ENCODE measurements at regions of chr11 and their contacts with region 1.

Region 1: GRCh38 chr11:117985953-117986887 is at the start of gene IL10RA:
- DNase-seq: peak; percentile 93 to 95 (median 94)
- H3K4me3 ChIP-seq: peak within 1 kb of the TSS; percentile 95 to 99 (median 98)
- H3K4me3 Mint-ChIP-seq: peak within 1 kb of the TSS; percentile 93 to 98
- H3K27ac ChIP-seq: peak within 1 kb of the TSS; percentile 96 to 100
- H3K27ac Mint-ChIP-seq: peak within 1 kb of the TSS; percentile 96 to 100 (median 98)
- H3K4me1 ChIP-seq: peaks cover 58 to 63% of the 10 kb centered on the region in 2 donors
- H3K4me1 Mint-ChIP-seq: peaks cover 74% of the 10 kb centered on the region
- H3K27me3 ChIP-seq: no peaks in the 10 kb centered on the region
- H3K27me3 Mint-ChIP-seq: peaks cover 0 to 1% (median 1%) of the 10 kb centered on the region in 3 donors
- CTCF ChIP-seq: no peak
- polyA plus RNA-seq, gene IL10RA: 152 to 413 (median 226) TPM

Region 2: GRCh38 chr11:117837070-117837776 is 149.0 kb before region 1 on chr11:
- intact Hi-C with region 1: loop called in 1 of 2 experiments (anchors 5 kb)
- DNase-seq: peak in 1 of 3 donors; percentile 59
- H3K4me3 ChIP-seq: peak overlapping the region in 2 of 3 experiments; percentile 35 to 71
- H3K4me3 Mint-ChIP-seq: peak overlapping the region; percentile 82 to 97
- H3K27ac ChIP-seq: peak overlapping the region; percentile 85 to 94
- H3K27ac Mint-ChIP-seq: peak overlapping the region in 6 of 7 donors; percentile 94 to 98 (median 96)
- H3K4me1 ChIP-seq: peaks cover 88 to 93% of the 10 kb centered on the region in 2 donors
- H3K4me1 Mint-ChIP-seq: peaks cover 92% of the 10 kb centered on the region
- H3K27me3 ChIP-seq: no peaks in the 10 kb centered on the region
- H3K27me3 Mint-ChIP-seq: peaks cover 0 to 5% (median 2%) of the 10 kb centered on the region in 3 donors
- CTCF ChIP-seq: no peak